Cardiac septum (tissue), 1 donor: ENCODE measurements at regions of chr22 and their contacts with region 1.

Region 1: GRCh38 chr22:37608477-37609239 is at the start of gene GGA1:
- DNase-seq: peak; percentile 98
- total RNA-seq, gene GGA1: 32.5 TPM

Region 2: GRCh38 chr22:37686002-37686982 is 77.6 kb after region 1 on chr22 and contains the start of gene NOL12:
- intact Hi-C with region 1: loop called (anchors 2 kb)
- DNase-seq: peak; percentile 94
- total RNA-seq, gene NOL12: 15.2 TPM

Region 3: DNA sequence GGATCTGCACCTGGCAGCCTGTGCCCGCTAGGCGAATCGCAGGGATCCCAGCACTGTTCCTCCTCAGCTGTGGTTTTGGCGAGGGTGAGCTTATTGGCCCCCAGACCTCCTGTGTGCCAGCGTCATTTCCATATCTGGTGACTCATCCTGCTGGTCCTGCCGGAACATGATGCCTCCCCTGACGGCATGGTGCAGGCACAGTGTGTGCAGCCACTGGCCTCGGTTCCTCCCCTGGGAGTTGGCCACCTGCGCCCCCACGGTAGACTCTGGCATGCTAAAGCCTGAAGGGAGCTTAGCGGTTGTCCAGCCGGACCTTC is 391.3 kb after region 1 on chr22:
- intact Hi-C with region 1: no loop called
- DNase-seq: no peak